Activated B cell treated with CpG ODN at 0.5 μM for 24 hours (primary cell): ENCODE measurements at regions of chr5 and their contacts with region 1.

Region 1: DNA sequence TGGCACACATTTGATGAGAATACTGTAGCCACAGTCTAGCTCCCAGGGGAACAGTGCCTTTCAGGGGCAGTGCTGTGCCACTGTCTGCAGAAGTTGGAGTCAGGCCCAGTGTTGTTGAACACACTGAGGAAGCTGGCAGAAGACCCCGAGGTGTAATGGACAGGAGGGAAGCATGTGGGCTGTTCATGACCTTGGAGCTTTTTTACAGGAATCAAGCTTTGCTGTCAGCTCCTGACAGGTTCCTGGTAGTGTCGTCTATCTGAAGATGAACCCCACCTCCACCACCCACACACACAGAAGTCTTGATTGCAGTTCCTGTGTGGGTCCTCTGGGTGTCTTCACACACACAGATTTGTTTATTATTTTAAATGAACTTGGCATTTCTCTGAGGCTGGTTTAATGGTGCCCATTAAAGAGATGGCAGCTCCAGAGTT is 40.3 kb upstream of the TNFAIP8 start:
- DNase-seq: no peak
- ATAC-seq: peak; percentile 78
- H3K4me3 Mint-ChIP-seq: peak overlapping the region; percentile 55
- H3K27ac Mint-ChIP-seq: peak overlapping the region; percentile 82
- H3K4me1 Mint-ChIP-seq: peaks cover 92% of the 10 kb centered on the region
- H3K27me3 Mint-ChIP-seq: no peaks in the 10 kb centered on the region
- CTCF ChIP-seq: no peak

Region 2: GRCh38 chr5:119267958-119268386 is 47.6 kb before region 1 on chr5:
- CTCF ChIA-PET with region 1: interaction called, 20 read pairs
- POLR2A ChIA-PET with region 1: interaction called, 14 read pairs
- intact Hi-C with region 1: loop called (anchors 1 kb)
- DNase-seq: peak; percentile 62
- ATAC-seq: peak; percentile 65
- H3K4me3 Mint-ChIP-seq: peak overlapping the region; percentile 95
- H3K27ac Mint-ChIP-seq: peak overlapping the region; percentile 95
- H3K4me1 Mint-ChIP-seq: peaks cover 50% of the 10 kb centered on the region
- H3K27me3 Mint-ChIP-seq: no peaks in the 10 kb centered on the region
- CTCF ChIP-seq: no peak

Region 3: GRCh38 chr5:119290161-119290569 is 25.4 kb before region 1 on chr5:
- CTCF ChIA-PET with region 1: interaction called, 11 read pairs
- POLR2A ChIA-PET with region 1: interaction called, 9 read pairs
- intact Hi-C with region 1: no loop called
- DNase-seq: no peak
- ATAC-seq: peak; percentile 93
- H3K4me3 Mint-ChIP-seq: peak overlapping the region; percentile 75
- H3K27ac Mint-ChIP-seq: peak overlapping the region; percentile 89
- H3K4me1 Mint-ChIP-seq: peaks cover 85% of the 10 kb centered on the region
- H3K27me3 Mint-ChIP-seq: no peaks in the 10 kb centered on the region
- CTCF ChIP-seq: no peak

Region 4: GRCh38 chr5:119340597-119341218 is 25.2 kb after region 1 on chr5:
- CTCF ChIA-PET with region 1: interaction called, 22 read pairs
- POLR2A ChIA-PET with region 1: interaction called, 15 read pairs
- intact Hi-C with region 1: loop called (anchors 1 kb)
- DNase-seq: no peak
- ATAC-seq: peak; percentile 25
- H3K4me3 Mint-ChIP-seq: peak overlapping the region; percentile 79
- H3K27ac Mint-ChIP-seq: peak overlapping the region; percentile 96
- H3K4me1 Mint-ChIP-seq: peaks cover 95% of the 10 kb centered on the region
- H3K27me3 Mint-ChIP-seq: no peaks in the 10 kb centered on the region
- CTCF ChIP-seq: no peak

Region 5: DNA sequence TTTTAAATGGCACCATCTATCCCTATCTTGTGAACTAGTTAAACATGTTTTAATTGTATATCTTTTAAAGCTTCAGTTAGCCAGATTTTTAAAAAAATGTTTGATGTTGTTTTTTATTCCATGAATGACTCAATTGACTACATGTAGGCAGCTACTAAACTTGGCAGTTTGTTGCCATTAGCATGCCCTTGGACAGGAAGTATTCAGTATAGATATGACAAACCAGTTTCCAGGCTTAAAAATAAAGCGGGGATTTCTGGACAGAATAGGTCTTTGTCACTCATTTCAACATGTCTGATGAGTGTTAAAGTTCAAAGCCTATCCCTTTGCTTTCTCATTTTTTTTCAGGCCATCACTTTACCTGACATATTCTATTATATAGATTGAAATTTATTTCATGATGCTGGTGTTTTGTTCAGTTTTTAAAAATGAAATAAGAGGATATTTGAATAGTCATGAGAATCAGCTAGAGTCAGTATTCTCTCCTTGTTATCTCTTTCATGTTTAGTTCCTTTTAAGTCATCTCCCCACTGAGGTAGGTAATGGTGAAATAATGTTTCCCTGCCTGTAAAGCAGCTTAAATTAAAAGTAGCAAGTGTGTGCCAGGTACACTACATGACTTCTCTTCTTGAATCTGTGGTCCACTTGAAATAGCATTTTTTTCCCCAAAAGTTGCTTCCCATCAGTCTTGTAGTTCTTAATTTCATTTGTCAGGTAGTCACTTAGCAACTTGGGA is 52.1 kb after region 1 on chr5:
- CTCF ChIA-PET with region 1: interaction called, 16 read pairs
- POLR2A ChIA-PET with region 1: interaction called, 7 read pairs
- intact Hi-C with region 1: no loop called
- DNase-seq: no peak
- ATAC-seq: peak; percentile 68
- H3K4me3 Mint-ChIP-seq: peak overlapping the region; percentile 71
- H3K27ac Mint-ChIP-seq: peak overlapping the region; percentile 84
- H3K4me1 Mint-ChIP-seq: peaks cover 89% of the 10 kb centered on the region
- H3K27me3 Mint-ChIP-seq: no peaks in the 10 kb centered on the region
- CTCF ChIP-seq: no peak

Region 6: GRCh38 chr5:119435436-119436132 is 120.1 kb after region 1 on chr5:
- CTCF ChIA-PET with region 1: interaction called, 13 read pairs
- POLR2A ChIA-PET with region 1: interaction called, 3 read pairs
- intact Hi-C with region 1: loop called (anchors 1 kb)
- DNase-seq: peak; percentile 73
- ATAC-seq: peak; percentile 93
- H3K4me3 Mint-ChIP-seq: peak overlapping the region; percentile 29
- H3K27ac Mint-ChIP-seq: peak overlapping the region; percentile 19
- H3K4me1 Mint-ChIP-seq: peaks cover 32% of the 10 kb centered on the region
- H3K27me3 Mint-ChIP-seq: no peaks in the 10 kb centered on the region
- CTCF ChIP-seq: peak; percentile 81

Region 7: GRCh38 chr5:120734033-120734432 is 1418.5 kb after region 1 on chr5:
- CTCF ChIA-PET with region 1: no interaction called
- POLR2A ChIA-PET with region 1: no interaction called
- intact Hi-C with region 1: no loop called
- DNase-seq: no peak
- ATAC-seq: no peak
- H3K4me3 Mint-ChIP-seq: no peak overlapping the region
- H3K27ac Mint-ChIP-seq: no peak overlapping the region
- H3K4me1 Mint-ChIP-seq: no peaks in the 10 kb centered on the region
- H3K27me3 Mint-ChIP-seq: no peaks in the 10 kb centered on the region
- CTCF ChIP-seq: no peak